ENCODE measurements at regions of chr19 and their contacts with region 1.

Region 1: GRCh38 chr19:50933640-50934039 is 19.2 kb downstream of the KLK5 start:
- DNase-seq: peak; percentile 52 to 93
- H3K4me3 ChIP-seq: no peak overlapping the region
- H3K27ac ChIP-seq: peak overlapping the region; percentile 89
- H3K4me1 ChIP-seq: peaks cover 43% of the 10 kb centered on the region
- H3K27me3 ChIP-seq: no peaks in the 10 kb centered on the region
- CTCF ChIP-seq: no peak

Region 2: DNA sequence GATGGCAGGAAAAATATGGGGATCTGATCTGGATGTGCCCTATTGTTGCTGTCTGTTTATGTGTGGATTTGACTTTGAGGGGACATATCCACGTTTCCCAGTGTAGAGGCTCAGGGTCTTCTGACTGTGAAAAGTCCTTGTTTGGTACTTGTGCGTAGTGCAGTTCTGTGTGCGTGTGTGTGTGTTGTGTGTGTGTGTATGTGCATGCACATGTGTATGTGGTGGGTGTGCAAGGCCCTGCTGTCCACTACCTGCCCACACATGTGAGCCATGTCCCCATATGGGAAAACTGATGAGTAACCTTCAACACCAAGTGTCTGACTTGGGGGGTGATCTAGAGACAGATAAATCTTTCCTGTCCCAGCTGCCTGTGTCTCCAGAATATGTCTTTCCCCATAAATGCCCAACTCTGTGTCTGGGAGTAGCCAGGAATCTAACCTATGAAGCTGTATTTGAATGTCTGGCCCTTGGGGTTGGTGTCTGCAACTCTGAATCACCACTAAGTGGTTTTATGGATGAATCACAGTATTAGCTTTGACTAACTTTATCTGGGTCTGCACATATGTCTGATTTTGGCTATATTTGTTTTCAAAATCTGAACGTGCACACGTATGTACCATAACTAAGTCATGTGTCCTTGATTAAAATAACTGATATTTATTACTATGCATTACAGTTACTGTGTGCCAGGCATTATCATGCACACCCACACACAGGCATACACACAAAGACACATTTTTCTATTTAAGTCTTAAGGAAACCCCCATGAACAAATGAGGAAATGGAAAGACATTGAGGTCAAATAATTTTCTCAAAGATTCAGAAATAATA is 43.0 kb before region 1 on chr19:
- CTCF ChIA-PET with region 1: no interaction called
- POLR2A ChIA-PET with region 1: no interaction called
- intact Hi-C with region 1: no loop called
- DNase-seq: no peak
- H3K4me3 ChIP-seq: no peak overlapping the region
- H3K27ac ChIP-seq: no peak overlapping the region
- H3K4me1 ChIP-seq: no peaks in the 10 kb centered on the region
- H3K27me3 ChIP-seq: peaks cover 43% of the 10 kb centered on the region
- CTCF ChIP-seq: no peak

Region 3: DNA sequence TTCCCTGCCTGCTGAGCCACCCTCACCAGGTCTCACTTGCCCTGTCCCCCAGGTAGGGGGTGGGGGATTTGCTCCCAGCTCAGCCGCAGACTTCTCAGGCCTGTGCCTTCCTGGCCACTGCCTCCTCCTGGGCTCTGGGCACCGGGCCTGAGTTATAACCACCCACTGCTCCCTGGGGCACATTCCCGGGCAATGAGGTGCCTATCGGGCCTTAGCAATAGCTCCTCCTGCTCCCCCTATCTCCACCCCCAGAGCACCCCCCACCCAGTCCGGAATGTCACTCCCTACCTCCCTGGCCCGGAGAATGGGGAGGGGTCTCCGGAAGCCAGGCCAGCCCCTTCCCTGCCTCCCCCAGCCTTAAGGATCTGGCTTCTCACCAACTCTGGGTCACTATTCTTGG is 19.3 kb after region 1 on chr19 and contains the start of gene KLK5:
- CTCF ChIA-PET with region 1: interaction called, 15 read pairs
- POLR2A ChIA-PET with region 1: interaction called, 15 read pairs
- intact Hi-C with region 1: loop called (anchors 2 kb)
- DNase-seq: peak; percentile 86 to 87
- H3K4me3 ChIP-seq: peak within 1 kb of the TSS; percentile 68
- H3K27ac ChIP-seq: peak within 1 kb of the TSS; percentile 55
- H3K4me1 ChIP-seq: peaks cover 13% of the 10 kb centered on the region
- H3K27me3 ChIP-seq: no peaks in the 10 kb centered on the region
- CTCF ChIP-seq: no peak
- total RNA-seq, gene KLK5: 405 and 412 TPM in 2 replicates

Region 4: GRCh38 chr19:50994129-50994528 is 60.5 kb after region 1 on chr19:
- CTCF ChIA-PET with region 1: no interaction called
- POLR2A ChIA-PET with region 1: interaction called, 4 read pairs
- intact Hi-C with region 1: loop called (anchors 1 kb)
- DNase-seq: peak in 1 of 2 experiments; percentile 62
- H3K4me3 ChIP-seq: no peak overlapping the region
- H3K27ac ChIP-seq: peak overlapping the region; percentile 99
- H3K4me1 ChIP-seq: peaks cover 37% of the 10 kb centered on the region
- H3K27me3 ChIP-seq: no peaks in the 10 kb centered on the region
- CTCF ChIP-seq: no peak

Region 5: GRCh38 chr19:51002542-51003171 is 69.0 kb after region 1 on chr19:
- CTCF ChIA-PET with region 1: interaction called, 4 read pairs
- POLR2A ChIA-PET with region 1: interaction called, 10 read pairs
- intact Hi-C with region 1: loop called (anchors 1 kb)
- DNase-seq: peak; percentile 94 to 98
- H3K4me3 ChIP-seq: peak overlapping the region; percentile 64
- H3K27ac ChIP-seq: peak overlapping the region; percentile 66
- H3K4me1 ChIP-seq: peaks cover 8% of the 10 kb centered on the region
- H3K27me3 ChIP-seq: no peaks in the 10 kb centered on the region
- CTCF ChIP-seq: no peak